BJ (cell line): ENCODE measurements at regions of chr4 and their contacts with region 1.

Region 1: GRCh38 chr4:177796841-177797240 is 354.6 kb upstream of the AGA start:
- DNase-seq: no peak
- H3K4me3 ChIP-seq: no peak overlapping the region
- H3K27me3 ChIP-seq: no peaks in the 10 kb centered on the region
- CTCF ChIP-seq: no peak

Region 2: GRCh38 chr4:177485528-177485927 is 311.3 kb before region 1 on chr4:
- CTCF ChIA-PET with region 1: no interaction called
- POLR2A ChIA-PET with region 1: interaction called, 20 read pairs
- DNase-seq: no peak
- H3K4me3 ChIP-seq: no peak overlapping the region
- H3K27me3 ChIP-seq: no peaks in the 10 kb centered on the region
- CTCF ChIP-seq: no peak

Region 3: GRCh38 chr4:177826973-177827372 is 30.1 kb after region 1 on chr4:
- CTCF ChIA-PET with region 1: no interaction called
- POLR2A ChIA-PET with region 1: no interaction called
- DNase-seq: no peak
- H3K4me3 ChIP-seq: no peak overlapping the region
- H3K27me3 ChIP-seq: no peaks in the 10 kb centered on the region
- CTCF ChIP-seq: no peak